ENCODE measurements at regions of chr1 and their contacts with region 1.

Region 1: DNA sequence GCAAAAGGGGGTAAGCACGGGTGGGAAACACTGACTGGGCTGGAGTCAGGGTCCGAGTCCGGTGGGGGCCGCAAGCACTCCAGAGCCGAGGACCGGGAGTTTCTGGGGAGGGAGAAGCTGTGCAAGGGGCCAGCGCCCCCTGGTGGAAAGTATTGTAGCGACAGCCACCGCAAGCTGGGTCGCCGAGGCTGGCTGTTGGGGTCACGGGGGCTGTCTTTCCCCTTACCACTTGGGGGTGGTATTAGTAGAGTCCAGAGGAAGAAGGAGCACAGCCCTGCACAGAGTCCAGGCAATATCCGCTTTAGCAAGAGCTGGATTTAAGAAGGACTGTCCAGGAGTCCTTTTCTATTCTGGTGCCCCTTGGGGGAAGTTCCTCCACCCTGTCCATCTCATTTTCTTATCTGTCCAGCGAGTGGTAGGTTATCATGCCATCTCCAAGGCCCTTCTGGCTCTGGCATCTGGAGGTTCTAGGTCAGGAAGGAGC is 17.9 kb upstream of the ETV3 start:
- DNase-seq: peak; percentile 84
- ATAC-seq: peak; percentile 59
- H3K4me3 Mint-ChIP-seq: peak overlapping the region; percentile 50
- H3K27ac Mint-ChIP-seq: peak overlapping the region; percentile 76
- H3K4me1 Mint-ChIP-seq: peaks cover 19% of the 10 kb centered on the region
- H3K27me3 Mint-ChIP-seq: peaks cover 27% of the 10 kb centered on the region

Region 2: DNA sequence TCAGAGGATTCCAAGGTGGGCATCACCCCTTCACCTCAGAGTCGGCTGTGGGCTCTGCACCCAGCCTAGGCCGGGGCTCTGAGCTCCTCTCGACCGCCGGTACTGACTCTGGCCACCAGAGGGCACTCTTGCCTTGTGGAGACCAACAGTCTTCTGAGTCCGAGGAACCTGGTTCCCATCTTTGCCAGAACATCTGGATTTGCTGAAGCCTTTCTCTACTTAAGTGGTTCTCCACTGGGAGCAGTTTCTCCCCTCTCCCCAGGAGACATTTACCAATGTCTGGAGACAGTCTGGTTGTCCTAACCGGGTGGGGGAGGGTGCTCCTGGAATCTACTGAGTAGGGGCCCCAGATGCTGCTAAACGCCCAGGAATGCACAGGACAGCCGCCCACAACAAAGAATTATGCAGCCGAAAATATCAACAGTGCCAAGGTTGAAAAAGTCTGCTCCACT is 65.9 kb before region 1 on chr1:
- POLR2A ChIA-PET with region 1: interaction called, 18 read pairs
- DNase-seq: peak; percentile 88
- ATAC-seq: peak; percentile 83
- H3K4me3 Mint-ChIP-seq: no peak overlapping the region
- H3K27ac Mint-ChIP-seq: no peak overlapping the region
- H3K4me1 Mint-ChIP-seq: no peaks in the 10 kb centered on the region
- H3K27me3 Mint-ChIP-seq: no peaks in the 10 kb centered on the region